Panc1 (cell line): ENCODE measurements at regions of chr6 and their contacts with region 1.

Region 1: DNA sequence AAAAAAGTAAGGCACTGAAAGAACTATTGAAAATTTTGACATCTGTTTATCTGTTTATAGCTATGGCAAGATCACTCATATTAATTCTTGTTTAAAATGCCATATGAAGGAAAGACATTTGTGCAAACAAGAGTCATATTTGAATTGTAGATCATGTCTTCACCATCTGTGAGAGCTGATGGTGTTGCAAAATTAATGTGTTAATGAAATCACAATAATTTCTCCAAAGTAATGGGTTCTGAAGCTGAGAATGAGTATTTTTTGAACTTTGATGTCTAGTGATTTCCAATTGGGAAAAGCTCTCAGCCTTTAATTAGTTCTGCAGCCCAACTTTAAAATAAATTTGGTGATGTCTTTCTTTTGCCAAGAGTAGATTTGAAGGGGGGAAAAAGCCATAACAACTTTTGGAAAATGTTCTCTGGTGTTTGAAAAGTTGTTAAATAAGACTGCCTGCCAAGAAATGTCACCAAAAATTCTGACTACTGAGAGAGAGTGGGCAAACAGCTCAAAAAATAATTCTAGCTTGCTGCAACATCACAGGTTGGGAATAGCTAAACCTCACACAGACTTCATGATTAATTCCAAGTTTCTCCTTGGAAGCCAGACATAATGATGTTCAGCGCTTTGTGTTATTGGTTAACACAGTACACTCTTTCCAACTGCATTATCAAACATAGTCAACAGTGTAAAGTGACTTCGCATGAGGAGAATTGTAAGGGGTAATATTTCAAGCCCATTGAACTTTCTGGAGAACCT is 142.6 kb downstream of the SOBP start:
- DNase-seq: no peak
- ATAC-seq: no peak
- H3K4me3 ChIP-seq: no peak overlapping the region
- H3K27ac ChIP-seq: no peak overlapping the region
- H3K4me1 ChIP-seq: peaks cover 3% of the 10 kb centered on the region; the same call in 1 of the 2 replicates
- H3K27me3 ChIP-seq: no peaks in the 10 kb centered on the region; the same call in 1 of the 2 replicates
- CTCF ChIP-seq: no peak

Region 2: GRCh38 chr6:107259951-107260350 is 372.6 kb before region 1 on chr6:
- CTCF ChIA-PET with region 1: no interaction called
- POLR2A ChIA-PET with region 1: no interaction called
- in situ Hi-C with region 1: no loop called
- intact Hi-C with region 1: no loop called
- DNase-seq: no peak
- ATAC-seq: no peak
- H3K4me3 ChIP-seq: no peak overlapping the region
- H3K27ac ChIP-seq: no peak overlapping the region
- H3K4me1 ChIP-seq: no peaks in the 10 kb centered on the region
- H3K27me3 ChIP-seq: no peaks in the 10 kb centered on the region
- CTCF ChIP-seq: no peak

Region 3: DNA sequence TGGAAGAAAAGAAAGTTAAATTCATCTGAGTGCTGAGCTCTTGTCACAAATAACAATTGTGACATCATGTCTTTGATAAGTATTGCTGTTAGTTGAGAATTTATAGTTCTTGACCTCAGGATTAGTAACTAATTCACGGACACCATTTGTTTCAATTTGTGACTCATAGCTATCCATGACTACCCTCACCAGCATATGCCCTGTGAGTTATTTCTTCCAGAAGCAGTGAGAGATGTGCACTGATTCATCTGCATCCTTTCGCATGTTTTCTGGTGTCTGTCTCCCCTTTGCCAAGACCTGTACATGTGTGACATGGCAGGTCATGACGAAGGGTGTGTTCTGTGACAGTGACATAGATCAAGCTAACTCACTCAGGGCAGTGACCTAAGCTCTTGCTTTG is 55.7 kb before region 1 on chr6:
- CTCF ChIA-PET with region 1: no interaction called
- POLR2A ChIA-PET with region 1: no interaction called
- in situ Hi-C with region 1: no loop called
- intact Hi-C with region 1: no loop called
- DNase-seq: peak; percentile 8
- ATAC-seq: no peak
- H3K4me3 ChIP-seq: no peak overlapping the region
- H3K27ac ChIP-seq: no peak overlapping the region
- H3K4me1 ChIP-seq: no peaks in the 10 kb centered on the region
- H3K27me3 ChIP-seq: no peaks in the 10 kb centered on the region
- CTCF ChIP-seq: no peak

Region 4: GRCh38 chr6:107645800-107646575 is 13.4 kb after region 1 on chr6:
- CTCF ChIA-PET with region 1: no interaction called
- POLR2A ChIA-PET with region 1: interaction called, 22 read pairs
- in situ Hi-C with region 1: no loop called
- intact Hi-C with region 1: no loop called
- DNase-seq: no peak
- ATAC-seq: 0 out of 2 replicates have a peak, but pooled peaks have one; percentile 27
- H3K4me3 ChIP-seq: no peak overlapping the region
- H3K27ac ChIP-seq: peak overlapping the region; percentile 52; the same call in 1 of the 2 replicates
- H3K4me1 ChIP-seq: peaks cover 35% of the 10 kb centered on the region
- H3K27me3 ChIP-seq: no peaks in the 10 kb centered on the region
- CTCF ChIP-seq: no peak